MCF 10A (cell line): ENCODE measurements at regions of chr17 and their contacts with region 1.

Region 1: GRCh38 chr17:65074778-65075250 is 18.3 kb upstream of the GNA13 start:
- DNase-seq: no peak
- H3K4me3 Mint-ChIP-seq: no peak overlapping the region
- H3K27ac Mint-ChIP-seq: no peak overlapping the region
- H3K4me1 Mint-ChIP-seq: no peaks in the 10 kb centered on the region
- H3K27me3 Mint-ChIP-seq: no peaks in the 10 kb centered on the region
- CTCF ChIP-seq: no peak

Region 2: GRCh38 chr17:65088411-65089345 is 13.9 kb after region 1 on chr17:
- CTCF ChIA-PET with region 1: interaction called, 3 read pairs
- POLR2A ChIA-PET with region 1: interaction called, 10 read pairs
- intact Hi-C with region 1: no loop called
- DNase-seq: peak; percentile 30
- H3K4me3 Mint-ChIP-seq: no peak overlapping the region
- H3K27ac Mint-ChIP-seq: peak overlapping the region; percentile 32
- H3K4me1 Mint-ChIP-seq: peaks cover 20% of the 10 kb centered on the region
- H3K27me3 Mint-ChIP-seq: peaks cover 16% of the 10 kb centered on the region
- CTCF ChIP-seq: no peak